AG04450 (cell line): ENCODE measurements at regions of chr6 and their contacts with region 1.

Region 1: GRCh38 chr6:55886185-55886836 is 10.9 kb upstream of the BMP5 start:
- DNase-seq: no peak
- H3K4me3 ChIP-seq: no peak overlapping the region
- H3K27ac ChIP-seq: no peak overlapping the region
- H3K27me3 ChIP-seq: no peaks in the 10 kb centered on the region
- CTCF ChIP-seq: peak; percentile 50

Region 2: GRCh38 chr6:55617272-55617671 is 269.0 kb before region 1 on chr6:
- CTCF ChIA-PET with region 1: interaction called, 11 read pairs
- POLR2A ChIA-PET with region 1: no interaction called
- DNase-seq: no peak
- H3K4me3 ChIP-seq: no peak overlapping the region
- H3K27ac ChIP-seq: no peak overlapping the region
- H3K27me3 ChIP-seq: no peaks in the 10 kb centered on the region
- CTCF ChIP-seq: peak; percentile 68

Region 3: DNA sequence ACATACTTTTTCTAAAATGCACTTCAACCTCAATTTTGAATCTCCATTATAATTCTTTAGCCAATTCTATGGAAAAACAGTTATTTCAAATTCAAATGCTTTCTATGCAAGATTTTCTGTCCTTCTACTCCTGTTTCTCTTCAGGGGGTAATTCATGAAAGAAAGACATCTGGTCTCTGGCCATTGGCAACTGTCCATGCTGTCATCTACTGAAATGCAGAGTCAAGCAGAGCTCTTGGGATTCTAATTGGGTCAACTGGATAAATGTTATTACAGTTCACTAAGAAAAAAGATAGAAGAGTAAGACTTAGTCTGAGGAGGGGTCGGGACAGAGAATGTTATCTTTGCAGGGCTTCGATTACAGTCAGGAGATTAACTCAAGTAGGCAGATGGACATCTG is 11.0 kb after region 1 on chr6:
- CTCF ChIA-PET with region 1: interaction called, 12 read pairs
- POLR2A ChIA-PET with region 1: no interaction called
- DNase-seq: no peak
- H3K4me3 ChIP-seq: no peak overlapping the region
- H3K27ac ChIP-seq: no peak overlapping the region
- H3K27me3 ChIP-seq: no peaks in the 10 kb centered on the region
- CTCF ChIP-seq: no peak

Region 4: GRCh38 chr6:55941702-55942101 is 55.4 kb after region 1 on chr6:
- CTCF ChIA-PET with region 1: interaction called, 14 read pairs
- POLR2A ChIA-PET with region 1: no interaction called
- DNase-seq: no peak
- H3K4me3 ChIP-seq: no peak overlapping the region
- H3K27ac ChIP-seq: no peak overlapping the region
- H3K27me3 ChIP-seq: no peaks in the 10 kb centered on the region
- CTCF ChIP-seq: peak; percentile 56

Region 5: DNA sequence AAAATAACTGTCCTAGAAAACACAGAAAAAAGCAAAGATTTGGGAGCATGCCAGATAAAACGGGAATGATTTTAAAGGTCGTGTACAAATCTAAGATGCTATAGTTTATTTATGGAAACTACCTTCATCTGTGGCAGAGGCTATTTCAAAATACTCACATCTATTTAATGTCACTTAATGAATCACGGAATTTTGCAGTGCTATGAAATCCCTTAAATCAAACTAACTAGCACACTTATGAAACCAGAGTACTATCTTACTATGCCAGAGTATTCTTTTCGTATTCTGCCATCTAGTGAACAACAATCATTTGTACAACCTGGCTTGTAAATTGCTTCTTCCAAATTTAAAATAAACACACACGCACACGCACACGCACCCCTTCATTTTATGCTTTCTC is 67.0 kb after region 1 on chr6:
- CTCF ChIA-PET with region 1: interaction called, 13 read pairs
- POLR2A ChIA-PET with region 1: no interaction called
- DNase-seq: peak; percentile 33
- H3K4me3 ChIP-seq: peak overlapping the region; percentile 34
- H3K27ac ChIP-seq: no peak overlapping the region
- H3K27me3 ChIP-seq: no peaks in the 10 kb centered on the region
- CTCF ChIP-seq: peak; percentile 62